ENCODE measurements at regions of chr3 and their contacts with region 1.

Region 1: GRCh38 chr3:187616307-187616972 is 53.8 kb downstream of the SST start:
- DNase-seq: peak; percentile 76
- H3K4me3 Mint-ChIP-seq: no peak overlapping the region
- H3K27ac Mint-ChIP-seq: no peak overlapping the region
- H3K4me1 Mint-ChIP-seq: peaks cover 5% of the 10 kb centered on the region
- H3K27me3 Mint-ChIP-seq: peaks cover 36% of the 10 kb centered on the region
- CTCF ChIP-seq: peak; percentile 78

Region 2: DNA sequence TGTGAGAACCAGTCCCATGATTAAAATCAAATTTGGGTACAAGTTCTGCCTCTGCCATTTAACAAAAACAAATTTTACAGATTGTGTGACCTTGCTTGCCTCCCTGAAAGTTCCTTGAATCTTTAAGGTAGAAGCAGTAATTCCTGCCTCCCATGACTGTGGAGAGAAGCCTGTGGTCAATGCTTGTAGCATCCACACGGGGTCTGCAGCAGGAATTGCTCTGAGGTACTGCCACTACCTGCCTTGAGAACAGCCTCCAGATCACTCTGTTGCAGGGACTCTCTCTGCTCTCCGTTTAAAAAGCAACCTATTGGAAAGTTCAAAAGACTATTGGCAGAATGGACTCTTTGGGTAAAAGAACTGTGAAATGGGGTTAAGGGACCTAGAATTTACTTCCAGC is 22.2 kb before region 1 on chr3:
- CTCF ChIA-PET with region 1: interaction called, 10 read pairs
- POLR2A ChIA-PET with region 1: no interaction called
- intact Hi-C with region 1: no loop called
- DNase-seq: no peak
- H3K4me3 Mint-ChIP-seq: no peak overlapping the region
- H3K27ac Mint-ChIP-seq: no peak overlapping the region
- H3K4me1 Mint-ChIP-seq: no peaks in the 10 kb centered on the region
- H3K27me3 Mint-ChIP-seq: peaks cover 65% of the 10 kb centered on the region
- CTCF ChIP-seq: no peak

Region 3: GRCh38 chr3:187669675-187670504 is 53.5 kb after region 1 on chr3 and contains the start of gene SST:
- CTCF ChIA-PET with region 1: interaction called, 11 read pairs
- POLR2A ChIA-PET with region 1: interaction called, 3 read pairs
- intact Hi-C with region 1: no loop called
- DNase-seq: peak; percentile 47
- H3K4me3 Mint-ChIP-seq: no peak within 1 kb of the TSS
- H3K27ac Mint-ChIP-seq: no peak within 1 kb of the TSS
- H3K4me1 Mint-ChIP-seq: no peaks in the 10 kb centered on the region
- H3K27me3 Mint-ChIP-seq: peaks cover 83% of the 10 kb centered on the region
- CTCF ChIP-seq: no peak
- total RNA-seq, gene SST: not detected in 2 replicates